ENCODE measurements at regions of chr14 and their contacts with region 1.

Region 1: GRCh38 chr14:55245657-55246268 is 25.5 kb upstream of the FBXO34 start:
- DNase-seq: peak; percentile 43 to 64 (median 56)
- H3K4me3 ChIP-seq: no peak overlapping the region
- H3K27ac ChIP-seq: no peak overlapping the region
- H3K4me1 ChIP-seq: no peaks in the 10 kb centered on the region
- H3K27me3 ChIP-seq: peaks cover 0 to 7% (median 0%) of the 10 kb centered on the region in 5 experiments

Region 2: DNA sequence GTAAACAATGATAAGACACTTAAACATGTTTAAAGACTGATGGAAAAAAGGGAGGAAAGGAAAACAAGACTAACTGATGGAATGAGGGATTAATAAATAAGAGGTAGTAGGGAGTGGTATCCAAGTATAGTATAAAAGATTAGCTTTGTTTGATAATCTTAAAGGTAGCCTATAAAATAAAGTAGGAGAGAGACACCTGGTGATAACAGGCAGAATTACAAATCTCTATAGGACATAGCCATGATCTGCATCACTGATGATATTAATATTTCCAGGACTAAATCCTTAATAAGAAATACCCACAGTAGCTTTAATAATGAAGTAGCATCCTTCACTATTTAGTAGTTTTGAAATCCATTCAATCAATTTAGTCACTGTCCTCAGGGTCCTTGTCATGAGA is 84.8 kb before region 1 on chr14:
- CTCF ChIA-PET with region 1: no interaction called
- POLR2A ChIA-PET with region 1: no interaction called
- DNase-seq: peak; percentile 45 to 64 (median 61)
- H3K4me3 ChIP-seq: no peak overlapping the region
- H3K27ac ChIP-seq: no peak overlapping the region
- H3K4me1 ChIP-seq: no peaks in the 10 kb centered on the region
- H3K27me3 ChIP-seq: no peaks in the 10 kb centered on the region

Region 3: DNA sequence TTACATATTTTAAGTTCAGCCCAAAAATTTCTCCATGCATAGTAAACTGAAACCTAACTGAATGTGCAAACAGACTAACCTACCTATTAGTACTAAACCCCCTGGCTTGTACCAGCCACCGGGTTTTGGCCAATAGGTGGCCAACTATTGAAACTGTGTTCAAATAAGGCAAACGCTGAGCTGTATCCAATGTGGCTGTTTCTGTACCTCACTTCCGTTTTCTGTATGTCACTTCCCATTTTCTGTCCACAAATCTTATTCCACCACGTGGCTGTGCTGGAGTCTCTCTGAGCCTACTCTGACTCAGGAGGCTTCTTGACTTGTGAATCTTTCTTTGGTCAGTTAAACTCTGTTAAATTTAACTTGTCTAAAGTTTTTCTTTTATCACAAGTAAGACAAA is 19.4 kb after region 1 on chr14:
- CTCF ChIA-PET with region 1: interaction called, 21 read pairs
- POLR2A ChIA-PET with region 1: interaction called, 5 read pairs
- DNase-seq: peak; percentile 53 to 88 (median 87)
- H3K4me3 ChIP-seq: no peak overlapping the region
- H3K27ac ChIP-seq: no peak overlapping the region
- H3K4me1 ChIP-seq: no peaks in the 10 kb centered on the region
- H3K27me3 ChIP-seq: no peaks in the 10 kb centered on the region

Region 4: DNA sequence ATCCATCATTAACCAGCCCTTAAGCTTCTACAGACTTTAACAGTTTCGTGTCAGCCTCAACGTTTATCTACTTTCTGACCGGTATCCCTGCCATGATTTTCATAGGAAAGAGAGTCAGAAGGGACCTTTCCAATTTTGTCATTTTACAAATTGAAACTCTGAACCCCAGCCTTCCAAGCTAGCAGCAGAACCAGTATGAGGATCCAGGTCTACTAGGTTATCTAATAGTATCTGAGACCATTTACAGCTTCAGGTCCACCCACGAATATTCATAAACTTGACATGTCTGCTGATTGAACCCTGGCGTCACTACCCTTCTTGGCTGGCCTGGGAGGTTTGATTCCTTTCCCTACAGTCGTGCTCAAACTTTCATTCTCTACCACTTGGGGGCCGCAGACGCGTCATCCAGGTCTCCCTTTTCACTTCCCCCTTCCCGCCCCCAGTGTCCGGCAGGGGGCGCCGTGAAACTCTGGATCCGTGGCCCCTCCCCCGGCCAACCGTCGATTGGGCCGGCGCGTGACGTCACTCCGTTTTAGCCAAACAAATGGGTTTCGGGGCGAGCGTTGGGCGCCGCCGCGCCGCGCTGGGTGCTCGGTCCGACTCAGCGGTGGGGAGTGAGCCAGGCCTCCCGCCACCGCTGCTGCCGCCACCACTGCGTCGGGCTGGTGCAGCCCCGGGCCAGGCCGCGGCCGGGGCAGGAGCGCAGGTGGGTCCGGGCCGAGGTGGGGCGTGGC is 25.2 kb after region 1 on chr14 and contains the start of gene FBXO34:
- CTCF ChIA-PET with region 1: interaction called, 21 read pairs
- POLR2A ChIA-PET with region 1: interaction called, 5 read pairs
- DNase-seq: peak; percentile 96 to 98 (median 97)
- H3K4me3 ChIP-seq: peak within 1 kb of the TSS; percentile 80 to 99 (median 95)
- H3K27ac ChIP-seq: peak within 1 kb of the TSS; percentile 89 to 96
- H3K4me1 ChIP-seq: peaks cover 5 to 27% (median 16%) of the 10 kb centered on the region in 4 experiments
- H3K27me3 ChIP-seq: no peaks in the 10 kb centered on the region

Measured in common myeloid progenitor, CD34-positive (primary cell).